ENCODE measurements at regions of chr2 and their contacts with region 1.

Region 1: GRCh38 chr2:218979846-218980734 is 4.9 kb downstream of the FEV start:
- DNase-seq: peak; percentile 81
- H3K4me3 ChIP-seq: no peak overlapping the region
- H3K27ac ChIP-seq: no peak overlapping the region
- H3K4me1 ChIP-seq: peaks cover 15% of the 10 kb centered on the region
- H3K27me3 ChIP-seq: peaks cover 41 to 53% of the 10 kb centered on the region in 2 experiments
- CTCF ChIP-seq: peak; percentile 91 to 98
- POLR2A ChIP-seq: no peak

Region 2: GRCh38 chr2:218898109-218898878 is 81.8 kb before region 1 on chr2:
- CTCF ChIA-PET with region 1: interaction called, 20 read pairs
- POLR2A ChIA-PET with region 1: no interaction called
- dilution Hi-C with region 1: no loop called
- intact Hi-C with region 1: no loop called
- DNase-seq: peak; percentile 35
- H3K4me3 ChIP-seq: no peak overlapping the region
- H3K27ac ChIP-seq: no peak overlapping the region
- H3K4me1 ChIP-seq: no peaks in the 10 kb centered on the region
- H3K27me3 ChIP-seq: peaks cover 66 to 77% of the 10 kb centered on the region in 2 experiments
- CTCF ChIP-seq: peak; percentile 93 to 98
- POLR2A ChIP-seq: no peak

Region 3: DNA sequence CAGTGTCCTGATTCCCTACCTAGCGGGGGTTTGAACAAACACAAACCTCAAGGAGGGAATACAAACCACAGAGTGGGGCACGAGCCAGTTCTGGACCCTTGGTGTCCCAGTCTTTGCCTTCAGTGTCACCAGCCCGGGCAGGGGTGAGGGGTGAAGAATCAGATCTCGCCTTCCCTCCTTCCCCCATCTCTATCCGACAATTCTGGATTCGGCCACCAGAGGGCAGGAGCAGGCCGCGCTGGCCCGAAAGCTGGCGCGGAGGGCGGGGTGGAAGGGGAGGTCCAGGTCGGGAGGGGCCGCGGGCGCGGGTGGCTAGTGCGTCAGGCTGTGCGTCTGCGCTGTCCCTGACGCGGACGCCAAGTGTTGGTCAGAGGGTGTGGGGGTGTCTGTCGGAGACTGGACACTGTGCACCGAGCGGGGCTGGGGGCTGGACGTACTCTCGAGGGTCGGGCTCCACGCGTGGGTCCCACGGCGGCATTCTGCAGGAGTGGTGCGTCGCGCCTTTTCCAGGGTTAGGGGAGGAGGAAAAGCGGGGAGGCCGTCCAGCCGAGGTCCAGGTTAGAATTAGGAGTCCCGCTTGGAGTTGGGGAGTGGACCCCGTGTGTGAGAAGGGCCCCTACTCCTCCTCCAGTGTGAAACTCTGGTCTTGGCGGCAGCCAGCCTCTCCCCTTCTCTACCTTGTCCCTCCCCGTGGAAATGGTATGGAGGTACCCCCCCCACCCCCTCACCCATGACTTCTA is 16.1 kb after region 1 on chr2:
- CTCF ChIA-PET with region 1: interaction called, 164 read pairs
- POLR2A ChIA-PET with region 1: no interaction called
- dilution Hi-C with region 1: no loop called
- intact Hi-C with region 1: no loop called
- DNase-seq: peak; percentile 65
- H3K4me3 ChIP-seq: no peak overlapping the region
- H3K27ac ChIP-seq: no peak overlapping the region
- H3K4me1 ChIP-seq: peaks cover 5% of the 10 kb centered on the region
- H3K27me3 ChIP-seq: peaks cover 79 to 83% of the 10 kb centered on the region in 2 experiments
- CTCF ChIP-seq: peak; percentile 73 to 94
- POLR2A ChIP-seq: no peak

Region 4: GRCh38 chr2:219020604-219021365 is 40.7 kb after region 1 on chr2:
- CTCF ChIA-PET with region 1: interaction called, 18 read pairs
- POLR2A ChIA-PET with region 1: no interaction called
- dilution Hi-C with region 1: no loop called
- intact Hi-C with region 1: no loop called
- DNase-seq: no peak
- H3K4me3 ChIP-seq: no peak overlapping the region
- H3K27ac ChIP-seq: no peak overlapping the region
- H3K4me1 ChIP-seq: no peaks in the 10 kb centered on the region
- H3K27me3 ChIP-seq: peaks cover 0 to 4% of the 10 kb centered on the region in 2 experiments
- CTCF ChIP-seq: no peak
- POLR2A ChIP-seq: no peak

Region 5: DNA sequence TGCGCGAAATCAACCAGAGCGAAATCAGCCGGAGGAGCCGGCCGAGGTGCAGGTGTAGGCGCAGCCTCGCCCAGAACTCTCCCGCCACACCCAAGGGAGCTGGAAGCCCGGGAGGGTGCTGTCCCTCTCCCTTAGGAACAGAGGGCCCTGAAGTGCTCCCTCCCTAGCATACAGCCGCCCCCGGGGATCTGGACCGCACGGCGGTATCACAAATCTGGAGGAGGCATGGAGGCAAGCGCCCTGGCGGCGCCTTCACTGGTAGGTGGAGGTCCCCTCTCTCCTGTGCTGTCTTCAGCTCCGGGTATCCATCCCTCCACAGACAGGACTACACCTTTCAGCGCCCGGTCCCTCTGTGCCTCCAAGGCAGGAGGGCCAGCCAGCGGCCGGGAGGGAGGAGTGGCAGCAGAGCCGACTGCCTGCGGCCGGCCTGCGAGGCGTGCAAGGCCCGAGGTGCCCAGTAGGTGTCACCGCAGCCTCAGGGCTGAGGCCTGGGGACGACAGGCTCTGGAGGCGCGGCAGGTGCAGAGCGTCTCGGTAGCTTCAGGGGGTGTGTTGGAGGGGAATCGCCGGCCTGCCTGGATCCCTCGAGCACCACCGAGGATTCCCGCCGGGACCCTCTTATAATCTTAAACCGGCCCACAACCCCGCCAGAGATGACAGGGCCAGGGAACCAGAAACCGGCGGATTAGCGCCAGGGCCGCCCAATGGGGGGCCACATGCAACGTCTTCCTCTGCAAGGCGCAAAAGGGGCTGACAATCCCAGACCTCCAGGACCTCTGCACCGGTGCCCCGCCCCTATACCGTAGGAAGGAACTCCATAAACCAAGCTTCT is 77.8 kb after region 1 on chr2:
- CTCF ChIA-PET with region 1: interaction called, 10 read pairs
- POLR2A ChIA-PET with region 1: no interaction called
- dilution Hi-C with region 1: no loop called
- intact Hi-C with region 1: loop called (anchors 5 kb)
- DNase-seq: peak; percentile 60
- H3K4me3 ChIP-seq: no peak overlapping the region
- H3K27ac ChIP-seq: no peak overlapping the region
- H3K4me1 ChIP-seq: no peaks in the 10 kb centered on the region
- H3K27me3 ChIP-seq: peaks cover 52 to 66% of the 10 kb centered on the region in 2 experiments
- CTCF ChIP-seq: peak; percentile 85 to 94
- POLR2A ChIP-seq: no peak

Region 6: DNA sequence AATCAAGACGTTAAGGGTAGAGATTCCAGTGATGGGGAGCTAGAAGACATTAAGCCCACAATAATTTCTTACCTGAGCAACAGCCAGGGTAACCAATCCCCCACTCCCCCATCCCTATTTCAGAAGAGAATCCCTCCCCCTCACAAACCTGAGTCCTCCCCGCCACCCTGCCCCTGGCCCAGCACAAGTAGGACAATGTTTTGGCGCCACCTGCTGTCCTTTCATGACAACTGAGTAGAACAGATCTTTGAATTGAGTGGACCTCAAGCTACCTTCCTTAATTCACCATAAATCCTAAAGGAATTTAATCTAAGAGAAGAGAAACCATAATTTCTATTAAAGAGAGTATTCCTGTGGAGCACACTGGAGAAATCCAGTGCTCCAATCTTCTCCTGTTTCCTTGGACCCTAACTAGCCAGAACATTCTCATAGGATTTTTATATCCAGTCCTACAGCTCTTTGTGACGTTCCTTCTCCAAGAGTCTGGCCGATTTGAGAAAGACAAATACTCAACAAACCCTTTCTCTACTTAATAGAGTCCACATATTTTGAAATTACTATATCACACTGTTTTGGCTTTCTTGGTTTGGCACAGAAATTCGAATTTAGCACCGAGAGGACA is 139.4 kb after region 1 on chr2:
- CTCF ChIA-PET with region 1: interaction called, 82 read pairs
- POLR2A ChIA-PET with region 1: no interaction called
- dilution Hi-C with region 1: no loop called
- intact Hi-C with region 1: loop called (anchors 1 kb)
- DNase-seq: peak; percentile 45
- H3K4me3 ChIP-seq: no peak overlapping the region
- H3K27ac ChIP-seq: no peak overlapping the region
- H3K4me1 ChIP-seq: no peaks in the 10 kb centered on the region
- H3K27me3 ChIP-seq: no peaks in the 10 kb centered on the region
- CTCF ChIP-seq: peak; percentile 57 to 64
- POLR2A ChIP-seq: no peak